Dendritic cell treated with granulocyte-macrophage colony-stimulating factor and Interleukin-4, amounts not matched to agents 40 ng/mL and 50 ng/mL, for 4 days (primary cell): ENCODE measurements at regions of chr20 and their contacts with region 1.

Region 1: GRCh38 chr20:23361598-23362384 is at the start of gene GZF1:
- H3K4me3 Mint-ChIP-seq: peak within 1 kb of the TSS; percentile 96
- H3K27ac Mint-ChIP-seq: peak within 1 kb of the TSS; percentile 98
- H3K4me1 Mint-ChIP-seq: peaks cover 49% of the 10 kb centered on the region
- H3K27me3 Mint-ChIP-seq: no peaks in the 10 kb centered on the region

Region 2: GRCh38 chr20:23305098-23305497 is 56.7 kb before region 1 on chr20:
- intact Hi-C with region 1: no loop called
- H3K4me3 Mint-ChIP-seq: no peak overlapping the region
- H3K27ac Mint-ChIP-seq: no peak overlapping the region
- H3K4me1 Mint-ChIP-seq: no peaks in the 10 kb centered on the region
- H3K27me3 Mint-ChIP-seq: peaks cover 18% of the 10 kb centered on the region

Region 3: GRCh38 chr20:23350196-23350903 is 11.4 kb before region 1 on chr20 and contains the start of gene NXT1:
- intact Hi-C with region 1: loop called (anchors 1 kb)
- H3K4me3 Mint-ChIP-seq: peak within 1 kb of the TSS; percentile 84
- H3K27ac Mint-ChIP-seq: peak within 1 kb of the TSS; percentile 95
- H3K4me1 Mint-ChIP-seq: peaks cover 21% of the 10 kb centered on the region
- H3K27me3 Mint-ChIP-seq: peaks cover 5% of the 10 kb centered on the region

Region 4: DNA sequence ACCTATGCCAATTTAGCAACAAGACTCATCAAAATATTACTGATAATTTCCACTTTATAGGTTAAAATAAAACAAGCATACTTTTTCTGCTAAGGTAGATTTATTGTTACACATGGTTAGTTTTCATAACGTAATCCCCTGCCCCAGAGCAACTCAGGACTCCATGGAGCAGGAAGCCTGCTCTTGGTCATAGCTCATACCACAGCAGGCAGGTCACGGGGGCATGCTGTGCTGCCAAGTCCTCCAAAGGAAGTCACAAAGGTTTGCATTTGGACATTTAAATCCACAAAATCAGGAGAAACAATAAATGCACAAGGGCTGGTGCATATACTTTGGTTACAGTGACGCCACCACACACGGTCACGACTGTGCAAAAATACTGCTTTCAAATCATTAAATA is 12.7 kb after region 1 on chr20:
- intact Hi-C with region 1: no loop called
- H3K4me3 Mint-ChIP-seq: no peak overlapping the region
- H3K27ac Mint-ChIP-seq: no peak overlapping the region
- H3K4me1 Mint-ChIP-seq: peaks cover 10% of the 10 kb centered on the region
- H3K27me3 Mint-ChIP-seq: no peaks in the 10 kb centered on the region

Region 5: GRCh38 chr20:23420943-23421931 is 59.4 kb after region 1 on chr20 and contains the start of gene NAPB:
- intact Hi-C with region 1: loop called (anchors 5 kb)
- H3K4me3 Mint-ChIP-seq: peak within 1 kb of the TSS; percentile 80
- H3K27ac Mint-ChIP-seq: peak within 1 kb of the TSS; percentile 83
- H3K4me1 Mint-ChIP-seq: peaks cover 8% of the 10 kb centered on the region
- H3K27me3 Mint-ChIP-seq: peaks cover 8% of the 10 kb centered on the region

Region 6: GRCh38 chr20:23446505-23446904 is 84.7 kb after region 1 on chr20:
- intact Hi-C with region 1: no loop called
- H3K4me3 Mint-ChIP-seq: no peak overlapping the region
- H3K27ac Mint-ChIP-seq: no peak overlapping the region
- H3K4me1 Mint-ChIP-seq: peaks cover 6% of the 10 kb centered on the region
- H3K27me3 Mint-ChIP-seq: peaks cover 4% of the 10 kb centered on the region